ENCODE measurements at regions of chr19 and their contacts with region 1.

Region 1: GRCh38 chr19:6481541-6482342 is at the start of gene DENND1C:
- DNase-seq: peak in 1 of 2 experiments; percentile 41
- ATAC-seq: peak; percentile 63 to 86
- H3K4me3 ChIP-seq: no peak within 1 kb of the TSS
- H3K27ac ChIP-seq: 0 out of 6 replicates have a peak within 1 kb of the TSS, but pooled peaks of 1 of the 2 experiments have one; percentile 13
- H3K4me1 ChIP-seq: no peaks in the 10 kb centered on the region
- CTCF ChIP-seq: peak; percentile 38; the same call in 2 of the 3 replicates
- EP300 ChIP-seq: no peak
- POLR2A ChIP-seq: no peak
- RAD21 ChIP-seq: peak; percentile 33 to 50
- polyA plus RNA-seq, gene DENND1C: 0.26 and 0.30 TPM in 2 replicates

Region 2: DNA sequence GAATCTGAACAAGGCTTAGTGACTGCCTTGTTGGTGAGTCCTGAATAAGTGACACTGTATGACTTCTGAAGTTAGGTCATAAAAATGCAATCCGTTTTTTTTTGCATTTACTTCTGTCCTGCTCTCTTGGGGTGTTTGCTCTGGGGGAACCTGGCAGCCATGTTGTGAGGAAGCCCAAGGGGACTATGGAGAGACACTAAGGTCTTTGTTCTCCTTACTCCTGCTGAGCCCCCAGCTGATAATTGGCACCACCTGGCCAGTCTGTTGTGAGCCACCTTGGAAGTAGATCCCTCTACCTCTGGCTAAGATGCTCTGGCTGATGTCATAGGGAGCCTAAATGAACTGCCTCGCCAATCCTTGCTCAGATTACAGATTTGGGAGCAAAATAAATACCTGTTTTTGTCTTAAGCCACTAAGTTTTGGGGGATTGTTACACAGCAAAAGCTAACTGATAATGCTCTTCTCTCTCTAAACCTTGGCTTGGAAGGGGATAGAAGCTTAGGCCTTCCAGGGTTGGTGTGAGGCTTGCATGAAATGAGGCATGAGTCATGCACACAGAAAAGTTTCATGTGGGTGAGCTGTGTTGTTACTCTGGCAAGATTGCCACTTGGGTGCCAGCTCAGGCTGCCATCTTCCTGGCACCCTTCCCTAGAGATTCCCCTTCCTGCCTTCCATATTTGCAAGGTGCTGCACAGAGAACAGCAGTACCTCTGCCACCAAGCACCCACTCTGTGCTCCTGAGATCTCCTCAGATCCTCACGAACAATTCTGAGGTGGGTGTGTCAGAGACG is 10.3 kb after region 1 on chr19:
- CTCF ChIA-PET with region 1: interaction called, 11 read pairs
- POLR2A ChIA-PET with region 1: no interaction called
- DNase-seq: no peak
- ATAC-seq: no peak
- H3K4me3 ChIP-seq: no peak overlapping the region
- H3K27ac ChIP-seq: no peak overlapping the region
- H3K4me1 ChIP-seq: no peaks in the 10 kb centered on the region
- CTCF ChIP-seq: no peak
- EP300 ChIP-seq: no peak
- POLR2A ChIP-seq: no peak
- RAD21 ChIP-seq: no peak